Cardiac septum (tissue), 1 donor: ENCODE measurements at regions of chr20 and their contacts with region 1.

Region 1: GRCh38 chr20:6008254-6008653 is 45.6 kb downstream of the LRRN4 start:
- DNase-seq: no peak

Region 2: GRCh38 chr20:6034134-6034969 is 26.1 kb after region 1 on chr20:
- intact Hi-C with region 1: loop called (anchors 1 kb)
- DNase-seq: no peak